Esophagus muscularis mucosa (tissue), 4 donors: ENCODE measurements at regions of chr14 and their contacts with region 1.

Region 1: DNA sequence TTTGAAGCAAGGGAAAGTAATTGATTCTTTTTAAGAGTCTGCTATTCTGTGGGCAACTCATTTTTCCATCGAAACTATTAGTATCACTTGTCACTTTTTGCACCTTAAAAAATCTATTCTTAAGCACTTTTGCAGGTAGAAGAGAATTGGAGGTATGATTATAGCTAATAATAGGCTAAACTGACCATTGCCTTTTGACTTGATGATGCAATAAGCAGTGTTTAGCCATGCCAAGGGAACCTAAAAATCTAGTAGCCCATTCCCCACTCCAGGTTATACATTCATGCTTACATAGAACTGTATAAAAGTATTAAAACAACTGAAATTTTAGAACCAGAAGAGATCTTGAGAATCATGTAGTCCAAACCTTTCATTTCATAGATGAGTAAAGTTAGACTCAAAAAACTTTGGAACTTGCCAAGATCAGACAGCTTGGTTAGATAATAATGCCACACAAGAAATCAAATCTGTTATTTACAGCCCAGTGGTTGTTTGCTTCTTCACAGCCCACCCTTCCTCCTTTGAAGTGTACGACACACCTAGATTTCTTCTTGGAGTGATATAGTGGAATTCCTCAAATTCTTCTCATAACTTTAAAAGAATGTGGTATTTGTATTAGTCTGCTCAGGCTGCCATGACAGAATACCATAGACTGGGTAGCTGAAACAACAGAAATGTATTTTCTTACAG is 21.7 kb upstream of the GARIN2 start:
- DNase-seq: no peak
- H3K4me3 ChIP-seq: no peak overlapping the region
- H3K27ac ChIP-seq: no peak overlapping the region
- H3K4me1 ChIP-seq: no peaks in the 10 kb centered on the region
- H3K27me3 ChIP-seq: no peaks in the 10 kb centered on the region
- CTCF ChIP-seq: no peak
- EP300 ChIP-seq: no peak
- POLR2A ChIP-seq: no peak

Region 2: GRCh38 chr14:67237591-67237990 is 70.0 kb after region 1 on chr14:
- intact Hi-C with region 1: loop called (anchors 2 kb)
- DNase-seq: no peak
- H3K4me3 ChIP-seq: no peak overlapping the region
- H3K27ac ChIP-seq: no peak overlapping the region
- H3K4me1 ChIP-seq: peaks cover 9 to 14% (median 10%) of the 10 kb centered on the region in 4 donors
- H3K27me3 ChIP-seq: no peaks in the 10 kb centered on the region
- CTCF ChIP-seq: no peak
- EP300 ChIP-seq: no peak
- POLR2A ChIP-seq: no peak

Region 3: DNA sequence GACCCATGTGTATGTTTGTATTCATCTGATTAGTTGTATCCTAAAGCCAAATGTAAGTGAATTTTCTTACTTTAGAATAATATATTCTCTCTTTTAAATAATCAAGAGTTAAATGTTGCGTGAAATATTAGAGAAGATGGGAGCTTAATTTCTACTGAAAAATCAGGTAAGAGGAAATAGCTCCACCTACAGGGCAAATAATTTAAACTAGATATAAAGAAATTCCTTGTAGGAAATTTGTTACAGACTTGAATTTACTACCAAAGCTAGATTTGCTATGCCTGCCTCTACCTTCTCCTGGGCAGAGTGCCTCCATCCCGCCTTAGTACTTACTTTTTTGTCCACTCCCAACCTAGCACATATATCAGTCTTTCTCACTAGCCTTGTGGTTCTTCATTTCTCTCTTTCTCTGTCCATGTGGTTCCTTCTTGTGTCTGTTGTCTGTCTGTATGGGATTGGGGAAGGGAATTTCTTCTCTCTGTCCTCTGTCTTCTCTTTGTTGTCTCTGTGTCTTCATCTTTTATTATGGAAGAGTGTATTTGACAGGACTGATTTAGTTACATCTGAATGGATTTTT is 118.4 kb after region 1 on chr14:
- intact Hi-C with region 1: loop called (anchors 1 kb)
- DNase-seq: no peak
- H3K4me3 ChIP-seq: no peak overlapping the region
- H3K27ac ChIP-seq: no peak overlapping the region
- H3K4me1 ChIP-seq: peaks cover 0 to 8% (median 5%) of the 10 kb centered on the region in 4 donors
- H3K27me3 ChIP-seq: no peaks in the 10 kb centered on the region
- CTCF ChIP-seq: peak; percentile 54 to 64 (median 63)
- EP300 ChIP-seq: no peak
- POLR2A ChIP-seq: no peak